Activated T-helper 1 cell treated with anti-CD3 and anti-CD28 coated beads, Interleukin-12 subunit alpha, Interleukin-12 subunit beta, Interleukin-2, Interleukin-4 antibody, amounts not matched to agents 30 ng/mL and 10 ng/mL and 1 ng/mL, durations not matched to agents 14 hours and 24 hours and 36 hours (primary cell): ENCODE measurements at regions of chr2 and their contacts with region 1.

Region 1: GRCh38 chr2:4291430-4291829 is 588.1 kb downstream of the DCDC2C start:
- DNase-seq: no peak
- H3K4me3 Mint-ChIP-seq: no peak overlapping the region
- H3K27ac Mint-ChIP-seq: no peak overlapping the region
- H3K4me1 Mint-ChIP-seq: no peaks in the 10 kb centered on the region
- H3K27me3 Mint-ChIP-seq: no peaks in the 10 kb centered on the region

Region 2: GRCh38 chr2:3780477-3781402 is 510.7 kb before region 1 on chr2:
- intact Hi-C with region 1: no loop called
- DNase-seq: peak; percentile 54
- H3K4me3 Mint-ChIP-seq: peak overlapping the region; percentile 5
- H3K27ac Mint-ChIP-seq: peak overlapping the region; percentile 67
- H3K4me1 Mint-ChIP-seq: peaks cover 8% of the 10 kb centered on the region
- H3K27me3 Mint-ChIP-seq: peaks cover 15% of the 10 kb centered on the region

Region 3: DNA sequence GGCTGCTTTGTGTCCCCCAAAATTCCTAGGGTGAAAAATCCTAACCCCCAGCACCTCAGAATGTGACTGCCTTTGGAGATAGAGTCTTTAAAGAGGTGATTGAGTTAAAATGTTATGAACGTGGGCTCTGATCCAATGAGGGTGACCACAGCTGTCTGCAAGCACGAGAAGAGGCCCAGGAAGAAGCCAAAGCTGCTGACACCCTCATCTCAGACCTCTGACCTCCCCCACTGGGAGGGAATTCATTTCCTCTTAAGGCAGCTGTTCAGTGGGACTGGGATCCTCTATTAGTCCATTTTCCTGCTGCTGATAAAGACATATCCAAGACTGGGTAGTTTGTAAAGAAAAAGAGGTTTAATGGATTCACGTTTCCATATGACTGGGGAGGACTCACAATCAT is 43.6 kb before region 1 on chr2:
- intact Hi-C with region 1: loop called (anchors 1 kb)
- DNase-seq: no peak
- H3K4me3 Mint-ChIP-seq: no peak overlapping the region
- H3K27ac Mint-ChIP-seq: no peak overlapping the region
- H3K4me1 Mint-ChIP-seq: no peaks in the 10 kb centered on the region
- H3K27me3 Mint-ChIP-seq: no peaks in the 10 kb centered on the region

Region 4: DNA sequence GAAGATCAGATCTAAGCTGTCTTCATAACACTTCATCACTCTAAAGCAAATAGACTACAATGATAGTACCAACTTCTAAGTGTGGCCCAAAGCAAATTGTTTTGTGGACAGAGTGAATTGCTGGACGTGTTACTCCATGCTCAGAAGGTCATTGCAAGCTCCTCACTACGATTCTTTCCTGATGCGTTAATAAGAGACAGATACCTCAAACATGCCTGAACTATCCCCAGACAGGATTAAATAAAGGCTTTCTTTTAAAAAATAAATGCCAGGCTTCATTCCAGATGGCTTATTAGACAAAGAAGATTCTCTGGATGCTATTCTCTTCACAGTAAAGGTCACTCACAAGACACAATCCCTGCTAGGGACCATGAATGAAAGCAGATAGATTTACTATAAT is 33.1 kb after region 1 on chr2:
- intact Hi-C with region 1: no loop called
- DNase-seq: no peak
- H3K4me3 Mint-ChIP-seq: no peak overlapping the region
- H3K27ac Mint-ChIP-seq: no peak overlapping the region
- H3K4me1 Mint-ChIP-seq: no peaks in the 10 kb centered on the region
- H3K27me3 Mint-ChIP-seq: no peaks in the 10 kb centered on the region

Region 5: DNA sequence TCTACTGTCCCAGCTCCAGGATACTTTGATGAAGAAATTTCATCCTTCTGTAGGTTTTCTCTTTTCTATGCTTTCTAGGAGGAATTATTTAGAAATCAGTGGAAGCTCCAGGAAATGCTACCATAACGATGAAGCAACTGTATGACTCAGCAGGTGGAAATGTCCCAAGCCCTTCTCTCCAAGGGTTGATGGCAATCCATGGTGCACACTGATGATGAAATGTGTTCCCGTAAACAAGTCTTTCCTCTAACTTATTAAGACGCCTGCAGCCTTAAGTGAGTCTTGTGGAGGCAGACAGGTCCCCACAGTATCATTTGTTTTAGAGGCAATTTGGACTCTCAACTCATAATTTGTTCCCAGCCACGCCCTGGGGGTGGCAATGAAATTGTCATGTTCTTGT is 623.1 kb after region 1 on chr2:
- intact Hi-C with region 1: no loop called
- DNase-seq: no peak
- H3K4me3 Mint-ChIP-seq: no peak overlapping the region
- H3K27ac Mint-ChIP-seq: no peak overlapping the region
- H3K4me1 Mint-ChIP-seq: no peaks in the 10 kb centered on the region
- H3K27me3 Mint-ChIP-seq: no peaks in the 10 kb centered on the region